ENCODE measurements at regions of chr11 and their contacts with region 1.

Region 1: GRCh38 chr11:130636722-130637517 is 188.5 kb downstream of the ADAMTS15 start:
- DNase-seq: peak; percentile 52 to 96
- H3K4me3 ChIP-seq: peak overlapping the region; percentile 37; the same call in 1 of the 2 replicates
- H3K27ac ChIP-seq: peak overlapping the region; percentile 90
- H3K4me1 ChIP-seq: peaks cover 74% of the 10 kb centered on the region
- H3K27me3 ChIP-seq: no peaks in the 10 kb centered on the region
- CTCF ChIP-seq: no peak

Region 2: DNA sequence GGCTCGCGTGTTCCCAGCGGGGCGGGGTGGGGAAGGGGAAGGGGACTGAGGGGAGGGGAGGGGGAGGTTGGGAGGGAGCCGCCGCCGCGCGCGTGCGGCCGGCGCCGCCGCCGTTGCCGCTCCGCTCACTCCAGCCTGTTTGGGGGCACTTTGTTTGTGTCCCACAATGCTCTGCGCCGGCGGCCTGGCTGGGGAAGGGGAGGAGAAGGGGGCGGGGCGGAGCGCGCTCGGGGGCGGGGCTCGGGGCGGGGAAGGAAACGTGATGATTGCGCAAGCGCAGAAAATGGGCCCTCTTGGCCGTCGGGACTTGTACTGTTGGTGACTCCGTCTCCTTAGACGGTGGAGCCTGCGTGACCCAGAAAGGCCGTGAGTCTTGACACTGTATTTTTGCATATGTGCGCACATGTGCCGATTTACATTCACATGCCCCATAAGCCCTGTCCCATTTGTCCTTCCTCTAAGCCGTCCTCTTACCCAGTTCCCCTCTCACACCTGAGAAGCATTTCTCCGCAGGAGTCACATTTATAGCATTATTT is 322.1 kb before region 1 on chr11 and contains the start of gene ZBTB44:
- CTCF ChIA-PET with region 1: no interaction called
- POLR2A ChIA-PET with region 1: no interaction called
- intact Hi-C with region 1: loop called (anchors 10 kb)
- DNase-seq: peak; percentile 70 to 83
- H3K4me3 ChIP-seq: peak within 1 kb of the TSS; percentile 68
- H3K27ac ChIP-seq: peak within 1 kb of the TSS; percentile 63
- H3K4me1 ChIP-seq: peaks cover 15% of the 10 kb centered on the region
- H3K27me3 ChIP-seq: no peaks in the 10 kb centered on the region
- CTCF ChIP-seq: no peak
- total RNA-seq, gene ZBTB44: 33.4 and 41.2 TPM in 2 replicates

Region 3: GRCh38 chr11:130478204-130478701 is 158.7 kb before region 1 on chr11:
- CTCF ChIA-PET with region 1: no interaction called
- POLR2A ChIA-PET with region 1: no interaction called
- intact Hi-C with region 1: loop called (anchors 10 kb)
- DNase-seq: peak; percentile 72 to 75
- H3K4me3 ChIP-seq: peak overlapping the region; percentile 10; the same call in 1 of the 2 replicates
- H3K27ac ChIP-seq: peak overlapping the region; percentile 70
- H3K4me1 ChIP-seq: peaks cover 28% of the 10 kb centered on the region
- H3K27me3 ChIP-seq: no peaks in the 10 kb centered on the region
- CTCF ChIP-seq: no peak

Region 4: GRCh38 chr11:130585545-130585944 is 51.4 kb before region 1 on chr11:
- CTCF ChIA-PET with region 1: no interaction called
- POLR2A ChIA-PET with region 1: no interaction called
- intact Hi-C with region 1: loop called (anchors 5 kb)
- DNase-seq: peak; percentile 29 to 55
- H3K4me3 ChIP-seq: no peak overlapping the region
- H3K27ac ChIP-seq: no peak overlapping the region
- H3K4me1 ChIP-seq: peaks cover 18% of the 10 kb centered on the region
- H3K27me3 ChIP-seq: no peaks in the 10 kb centered on the region
- CTCF ChIP-seq: no peak

Region 5: DNA sequence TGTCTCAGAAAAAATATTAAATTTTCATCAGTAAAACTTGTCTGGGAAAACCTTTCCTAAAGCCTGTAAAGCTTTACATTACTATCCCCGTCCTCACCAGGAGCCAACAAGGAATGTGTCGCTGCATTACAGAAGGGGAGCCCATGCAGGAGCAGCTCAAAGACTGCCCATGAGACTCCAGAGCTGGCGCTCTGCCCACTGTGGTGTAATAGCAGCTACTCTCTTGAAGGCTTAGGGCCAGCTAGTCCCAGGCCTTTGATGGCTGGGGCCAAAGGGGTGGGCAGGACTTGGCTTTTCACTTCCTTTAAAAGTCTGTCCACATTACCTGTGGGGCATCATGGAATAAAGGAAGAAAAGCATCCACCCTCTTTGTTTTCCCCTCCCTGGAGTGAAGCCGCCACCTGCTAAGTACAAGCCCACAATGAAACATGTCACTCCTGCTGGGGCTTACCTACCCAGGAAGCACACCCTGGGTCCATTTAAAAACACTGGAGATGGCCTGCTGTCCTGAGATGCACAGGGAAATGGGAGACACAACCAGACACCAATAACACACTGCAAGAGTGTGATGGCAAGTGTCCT is 37.8 kb before region 1 on chr11:
- CTCF ChIA-PET with region 1: no interaction called
- POLR2A ChIA-PET with region 1: no interaction called
- intact Hi-C with region 1: no loop called
- DNase-seq: no peak
- H3K4me3 ChIP-seq: no peak overlapping the region
- H3K27ac ChIP-seq: no peak overlapping the region
- H3K4me1 ChIP-seq: no peaks in the 10 kb centered on the region
- H3K27me3 ChIP-seq: no peaks in the 10 kb centered on the region
- CTCF ChIP-seq: no peak

Region 6: DNA sequence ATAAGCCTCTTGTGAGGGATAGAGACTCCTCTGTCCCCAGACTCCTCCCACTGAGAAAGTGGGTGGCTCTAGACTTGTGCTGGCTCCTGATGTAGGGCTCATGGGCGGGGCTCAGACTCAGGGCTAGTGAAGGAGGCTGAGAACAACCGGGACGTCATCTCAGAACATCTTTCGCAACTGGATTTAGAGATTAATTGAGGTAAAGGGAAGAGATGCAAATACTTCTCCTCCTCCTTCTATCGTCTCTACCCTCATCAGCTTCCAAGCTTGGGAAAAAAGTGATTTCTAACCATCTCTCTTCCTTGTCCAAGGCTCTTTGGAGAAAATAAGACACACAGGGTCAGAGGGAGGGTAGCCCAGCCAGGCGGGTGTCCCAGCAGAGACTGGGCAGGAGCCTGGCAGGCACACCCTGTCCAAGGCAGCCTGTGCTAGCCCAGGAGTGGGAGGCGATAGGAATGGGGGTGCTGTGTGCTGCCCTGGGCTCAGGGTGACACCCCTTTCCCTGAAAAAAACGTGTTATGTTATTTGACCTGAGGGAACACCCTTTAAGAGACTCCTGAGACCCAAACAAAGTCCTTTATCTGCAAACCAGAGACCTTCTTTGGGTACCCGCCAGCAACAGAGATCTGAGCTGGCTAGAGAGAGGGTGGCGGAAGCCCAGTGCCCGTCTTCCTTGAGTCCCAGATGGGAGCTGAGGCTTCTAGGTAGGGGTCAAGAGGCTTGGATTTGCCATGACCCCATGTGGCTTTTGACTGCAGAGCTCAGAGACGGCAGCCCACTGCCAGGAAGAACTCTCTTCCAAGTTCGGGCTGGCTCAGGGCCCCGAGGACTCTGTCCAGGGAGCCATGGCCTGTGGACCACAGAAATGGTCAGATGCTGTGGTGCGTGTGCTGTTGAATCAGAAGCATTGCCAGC is 27.5 kb before region 1 on chr11:
- CTCF ChIA-PET with region 1: no interaction called
- POLR2A ChIA-PET with region 1: no interaction called
- intact Hi-C with region 1: no loop called
- DNase-seq: no peak
- H3K4me3 ChIP-seq: no peak overlapping the region
- H3K27ac ChIP-seq: no peak overlapping the region
- H3K4me1 ChIP-seq: 0 out of 2 replicates have a peak, but pooled peaks cover 5% of the 10 kb centered on the region
- H3K27me3 ChIP-seq: no peaks in the 10 kb centered on the region
- CTCF ChIP-seq: no peak

Region 7: GRCh38 chr11:130677486-130678153 is 40.7 kb after region 1 on chr11:
- CTCF ChIA-PET with region 1: no interaction called
- POLR2A ChIA-PET with region 1: interaction called, 11 read pairs
- intact Hi-C with region 1: loop called (anchors 2 kb)
- DNase-seq: peak; percentile 70 to 74
- H3K4me3 ChIP-seq: no peak overlapping the region; the same call in 1 of the 2 replicates
- H3K27ac ChIP-seq: no peak overlapping the region
- H3K4me1 ChIP-seq: peaks cover 15% of the 10 kb centered on the region
- H3K27me3 ChIP-seq: no peaks in the 10 kb centered on the region
- CTCF ChIP-seq: no peak

Region 8: DNA sequence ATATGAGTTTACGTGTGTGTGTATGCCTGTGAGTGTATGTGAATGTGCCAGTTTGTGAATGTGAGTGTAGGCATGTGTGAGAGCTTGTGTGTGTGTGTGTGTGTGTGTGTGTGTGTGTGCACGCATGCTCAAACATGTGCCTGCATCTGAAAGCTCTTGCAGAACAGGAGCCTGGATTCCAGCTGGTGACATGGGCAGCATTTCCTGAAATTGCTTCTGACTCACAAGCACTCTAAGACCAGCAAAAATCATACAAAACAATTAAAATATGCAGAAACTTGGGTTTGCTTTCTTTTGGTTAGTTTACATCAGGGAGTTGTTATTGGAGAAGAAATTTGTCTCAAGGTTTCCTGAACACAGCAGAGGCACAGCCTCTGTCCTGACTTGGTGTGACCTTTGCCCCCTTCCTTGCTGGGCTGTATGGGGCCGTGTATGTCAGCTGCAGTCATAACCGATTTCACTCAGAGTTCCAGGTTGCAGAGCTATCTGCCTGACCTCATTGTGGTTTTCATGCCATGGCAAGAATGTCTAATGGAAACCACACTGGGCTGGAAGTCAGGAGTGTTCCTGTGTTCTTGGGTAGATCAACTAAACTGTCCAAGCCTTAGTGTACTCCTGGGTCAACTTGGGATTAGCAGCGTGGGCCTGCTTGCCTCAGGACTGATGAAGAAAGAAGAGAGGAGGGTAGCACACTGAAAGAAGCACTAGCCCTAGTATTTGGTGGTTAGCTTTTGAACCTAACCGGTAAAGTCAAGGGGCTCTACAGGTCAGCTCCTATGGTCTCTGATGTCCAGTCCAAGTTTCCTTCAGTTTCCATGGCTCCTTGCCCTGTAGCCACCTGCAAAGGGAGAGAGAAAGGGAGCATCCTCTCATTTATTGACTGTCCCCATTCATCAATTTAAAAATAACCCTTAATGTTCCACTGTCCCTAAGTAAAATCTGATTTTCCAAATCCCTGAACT is 135.6 kb after region 1 on chr11:
- CTCF ChIA-PET with region 1: no interaction called
- POLR2A ChIA-PET with region 1: no interaction called
- intact Hi-C with region 1: loop called (anchors 2 kb)
- DNase-seq: peak; percentile 59 to 71
- H3K4me3 ChIP-seq: no peak overlapping the region
- H3K27ac ChIP-seq: peak overlapping the region; percentile 3; the same call in 1 of the 2 replicates
- H3K4me1 ChIP-seq: peaks cover 31% of the 10 kb centered on the region
- H3K27me3 ChIP-seq: no peaks in the 10 kb centered on the region
- CTCF ChIP-seq: no peak

Measured in PC-9 (cell line).